ENCODE measurements at regions of chr10 and their contacts with region 1.

Region 1: DNA sequence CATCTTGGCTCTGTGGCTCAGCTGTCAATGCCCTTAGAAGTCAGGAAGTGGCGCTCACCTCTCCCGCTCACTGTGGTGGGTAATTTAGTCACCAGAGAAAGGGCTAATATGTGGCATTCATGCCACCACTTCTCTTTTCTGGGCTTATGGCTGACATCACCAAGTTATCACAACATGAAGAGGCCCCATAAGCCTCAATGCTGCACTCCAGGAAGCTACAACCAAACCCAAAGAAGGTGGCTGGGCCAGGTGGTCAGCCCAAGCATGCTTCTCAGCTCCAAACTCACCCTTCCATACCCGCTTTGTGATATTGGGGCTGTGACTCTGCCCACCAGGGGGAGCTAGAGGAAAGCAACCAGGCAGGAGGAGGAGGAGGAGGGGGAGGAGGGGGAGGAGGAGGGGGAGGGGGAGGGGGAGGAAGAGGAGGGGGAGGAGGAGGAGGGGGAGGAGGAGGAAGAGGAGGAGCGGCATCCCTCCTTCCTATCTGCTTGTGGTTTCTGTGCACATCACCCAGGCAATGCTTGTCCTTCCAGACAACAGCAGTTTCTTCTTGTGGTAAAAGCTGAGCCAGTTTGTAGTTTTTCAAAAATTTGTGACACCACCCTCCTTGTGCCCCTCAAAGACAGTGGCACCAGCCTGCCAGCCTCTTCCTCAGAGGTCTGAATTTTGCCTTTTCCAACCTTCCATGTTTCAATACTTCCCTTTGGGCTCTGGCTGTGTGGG is 42.1 kb downstream of the CYP26A1 start:
- DNase-seq: peak; percentile 80
- ATAC-seq: peak; percentile 80
- H3K4me3 Mint-ChIP-seq: no peak overlapping the region
- H3K27ac Mint-ChIP-seq: no peak overlapping the region
- H3K4me1 Mint-ChIP-seq: peaks cover 9% of the 10 kb centered on the region
- H3K27me3 Mint-ChIP-seq: peaks cover 8% of the 10 kb centered on the region
- CTCF ChIP-seq: peak; percentile 55

Region 2: DNA sequence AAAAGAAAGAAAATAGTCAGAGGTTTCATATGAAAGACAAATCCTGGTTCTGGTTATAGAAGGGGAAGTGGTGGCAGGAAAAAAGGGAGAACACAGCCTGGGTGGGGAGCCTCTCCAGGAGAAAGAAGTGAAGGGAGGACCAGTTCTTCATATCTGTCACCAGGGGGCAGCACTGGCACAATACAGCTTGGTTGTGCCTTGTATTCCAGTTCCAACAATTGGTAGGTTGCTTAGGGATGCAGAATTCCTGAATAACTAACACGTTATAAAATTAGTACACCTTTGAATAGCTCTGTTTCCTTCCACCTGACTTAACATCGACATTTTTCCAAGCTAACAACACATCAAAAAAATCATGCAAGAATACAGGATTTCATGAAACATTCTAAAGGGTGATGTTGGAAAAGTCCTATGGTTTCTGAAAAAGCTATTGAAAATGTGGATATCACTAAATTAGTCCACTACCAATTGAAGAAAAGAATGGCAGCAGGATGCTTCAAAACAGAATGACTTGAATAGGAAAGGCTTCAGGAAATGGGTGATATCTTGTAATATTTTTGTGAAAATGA is 10.7 kb after region 1 on chr10:
- CTCF ChIA-PET with region 1: interaction called, 26 read pairs
- POLR2A ChIA-PET with region 1: interaction called, 3 read pairs
- intact Hi-C with region 1: no loop called
- DNase-seq: peak; percentile 32
- ATAC-seq: no peak
- H3K4me3 Mint-ChIP-seq: no peak overlapping the region
- H3K27ac Mint-ChIP-seq: no peak overlapping the region
- H3K4me1 Mint-ChIP-seq: peaks cover 22% of the 10 kb centered on the region
- H3K27me3 Mint-ChIP-seq: no peaks in the 10 kb centered on the region
- CTCF ChIP-seq: peak; percentile 61

Region 3: GRCh38 chr10:93364966-93365365 is 249.1 kb after region 1 on chr10:
- CTCF ChIA-PET with region 1: no interaction called
- POLR2A ChIA-PET with region 1: no interaction called
- intact Hi-C with region 1: no loop called
- DNase-seq: no peak
- ATAC-seq: no peak
- H3K4me3 Mint-ChIP-seq: no peak overlapping the region
- H3K27ac Mint-ChIP-seq: peak overlapping the region; percentile 4
- H3K4me1 Mint-ChIP-seq: no peaks in the 10 kb centered on the region
- H3K27me3 Mint-ChIP-seq: peaks cover 1% of the 10 kb centered on the region
- CTCF ChIP-seq: no peak